ENCODE measurements at regions of chr1 and their contacts with region 1.

Region 1: DNA sequence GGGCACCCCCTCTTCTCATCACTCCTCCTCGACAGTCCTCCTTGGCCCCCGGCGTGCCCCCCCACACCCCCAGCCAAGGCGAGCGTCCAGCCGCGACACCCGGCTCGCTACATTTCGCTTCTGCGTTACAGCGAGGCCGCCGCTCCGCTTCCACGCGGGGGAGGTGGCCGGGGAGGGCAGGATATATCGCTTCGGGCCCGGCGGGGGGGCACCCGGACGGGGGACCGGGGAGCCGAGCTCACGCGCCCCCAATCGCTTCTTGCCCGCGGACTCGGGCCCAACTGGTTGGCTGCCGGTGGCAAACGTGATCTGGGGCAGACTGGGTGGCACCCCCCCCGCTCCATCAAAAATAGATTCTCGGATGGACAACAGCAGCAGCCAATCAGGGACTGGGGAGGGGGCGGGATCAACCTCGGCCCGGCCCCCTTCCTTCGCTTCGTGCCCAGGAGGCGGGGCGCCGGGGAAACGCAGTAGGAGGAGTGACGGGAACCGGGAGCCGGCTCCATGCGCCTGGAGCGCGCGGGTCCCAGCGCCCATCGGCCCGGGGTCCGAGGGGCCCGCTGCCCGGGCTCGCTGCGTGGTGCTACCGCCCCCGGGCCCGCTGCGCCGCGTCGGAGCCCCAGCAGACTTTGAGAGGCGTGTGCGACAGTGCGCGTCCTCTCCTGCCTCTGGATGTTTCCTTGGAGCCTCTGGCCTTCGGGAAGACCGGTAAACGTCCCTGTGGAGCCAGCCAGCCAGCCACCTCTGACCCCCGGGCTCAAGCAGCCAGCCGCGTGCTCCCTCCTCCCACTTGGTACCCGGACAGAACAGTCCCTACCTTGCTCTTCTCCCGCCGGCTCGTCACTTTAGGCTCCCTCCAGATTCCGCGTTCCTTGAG is at the start of gene SLC41A1:
- DNase-seq: peak; percentile 95
- H3K4me3 Mint-ChIP-seq: peak within 1 kb of the TSS; percentile 89
- H3K27ac Mint-ChIP-seq: peak within 1 kb of the TSS; percentile 74
- H3K4me1 Mint-ChIP-seq: peaks cover 49% of the 10 kb centered on the region
- H3K27me3 Mint-ChIP-seq: no peaks in the 10 kb centered on the region
- total RNA-seq, gene SLC41A1: 32.1 to 33.9 TPM

Region 2: DNA sequence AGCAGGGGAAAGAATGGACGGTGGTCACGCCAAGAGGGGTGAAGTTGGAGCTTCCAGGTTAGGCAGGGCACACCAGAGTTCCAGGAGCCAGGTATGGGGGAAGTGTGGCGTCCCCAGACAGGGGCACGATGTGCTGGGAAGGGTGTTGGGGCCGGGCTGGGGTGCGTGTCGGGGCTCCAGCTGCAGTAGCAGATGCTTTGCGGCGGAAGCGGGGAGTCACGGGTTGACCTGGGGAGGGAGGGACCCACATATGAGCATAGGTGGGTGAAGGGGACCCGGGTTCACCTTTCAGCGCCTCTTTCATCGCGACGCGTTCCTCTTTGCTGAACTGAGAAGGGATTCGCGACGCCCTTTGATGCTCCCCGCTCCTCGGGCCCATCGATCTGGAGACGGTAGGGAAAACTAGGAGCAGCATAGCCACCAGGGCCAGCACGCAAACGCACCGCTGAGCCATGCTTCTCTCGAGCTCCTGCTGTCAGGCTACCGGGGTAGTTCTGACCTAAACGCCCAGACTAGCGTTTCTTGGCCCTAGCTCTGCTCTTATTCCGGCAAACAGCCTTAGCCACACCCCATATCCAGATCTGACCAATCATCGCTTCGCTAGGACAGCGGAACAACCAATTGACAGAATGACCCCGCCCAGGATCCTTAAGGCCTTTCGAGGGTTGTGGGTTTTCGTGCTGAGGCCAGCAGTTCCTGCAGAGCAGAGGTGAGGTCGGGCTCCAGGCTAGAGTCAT is 36.7 kb after region 1 on chr1 and contains the start of gene PM20D1:
- CTCF ChIA-PET with region 1: no interaction called
- intact Hi-C with region 1: loop called (anchors 2 kb)
- DNase-seq: peak; percentile 92
- H3K4me3 Mint-ChIP-seq: peak within 1 kb of the TSS; percentile 87
- H3K27ac Mint-ChIP-seq: peak within 1 kb of the TSS; percentile 53
- H3K4me1 Mint-ChIP-seq: peaks cover 28% of the 10 kb centered on the region
- H3K27me3 Mint-ChIP-seq: no peaks in the 10 kb centered on the region
- total RNA-seq, gene PM20D1: 0.59 to 0.62 TPM

Region 3: DNA sequence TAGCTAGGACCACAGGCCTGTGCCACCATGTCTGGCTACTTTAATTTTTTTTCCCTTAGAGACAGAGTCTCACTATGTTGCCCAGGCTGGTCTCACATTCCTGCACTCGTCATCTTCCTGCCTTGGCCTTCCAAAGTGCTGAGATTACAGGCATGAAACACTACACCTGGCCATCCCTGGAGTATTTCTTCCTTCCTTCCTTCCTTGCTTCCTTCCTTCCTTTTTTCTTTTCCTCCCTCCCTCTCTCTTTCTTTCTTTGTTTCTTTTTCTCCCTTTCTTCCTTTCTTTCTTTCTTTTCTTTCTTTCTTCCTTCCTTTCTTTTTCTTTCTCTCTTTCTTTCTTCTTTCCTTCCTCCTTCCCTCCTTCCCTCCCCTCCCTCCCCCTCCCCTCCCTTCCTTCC is 83.2 kb after region 1 on chr1:
- CTCF ChIA-PET with region 1: no interaction called
- intact Hi-C with region 1: no loop called
- DNase-seq: no peak
- H3K4me3 Mint-ChIP-seq: no peak overlapping the region
- H3K27ac Mint-ChIP-seq: no peak overlapping the region
- H3K4me1 Mint-ChIP-seq: peaks cover 2% of the 10 kb centered on the region
- H3K27me3 Mint-ChIP-seq: peaks cover 11% of the 10 kb centered on the region

Region 4: GRCh38 chr1:205916541-205916940 is 103.4 kb after region 1 on chr1:
- CTCF ChIA-PET with region 1: no interaction called
- intact Hi-C with region 1: no loop called
- DNase-seq: no peak
- H3K4me3 Mint-ChIP-seq: no peak overlapping the region
- H3K27ac Mint-ChIP-seq: no peak overlapping the region
- H3K4me1 Mint-ChIP-seq: no peaks in the 10 kb centered on the region
- H3K27me3 Mint-ChIP-seq: no peaks in the 10 kb centered on the region

Region 5: GRCh38 chr1:205998457-205999241 is 185.5 kb after region 1 on chr1:
- CTCF ChIA-PET with region 1: no interaction called
- intact Hi-C with region 1: no loop called
- DNase-seq: no peak
- H3K4me3 Mint-ChIP-seq: no peak overlapping the region
- H3K27ac Mint-ChIP-seq: no peak overlapping the region
- H3K4me1 Mint-ChIP-seq: peaks cover 15% of the 10 kb centered on the region
- H3K27me3 Mint-ChIP-seq: no peaks in the 10 kb centered on the region

Region 6: DNA sequence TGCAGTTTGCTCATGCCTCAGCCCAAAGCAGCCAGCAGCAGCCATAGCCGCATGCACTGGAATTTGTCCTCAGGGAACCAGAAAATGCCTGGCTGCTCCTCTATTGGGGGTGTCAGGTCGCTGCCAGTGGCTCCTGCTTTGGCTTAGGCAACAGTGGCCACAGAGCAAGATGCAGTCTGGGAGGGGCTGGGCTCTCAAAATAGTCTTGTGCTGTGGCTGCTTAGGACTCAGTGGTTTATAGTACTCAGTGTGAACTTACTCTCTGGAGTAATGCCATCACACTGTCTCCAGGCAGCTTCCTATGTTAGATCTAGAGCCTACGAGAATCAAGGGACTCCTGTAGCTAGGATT is 1533.4 kb after region 1 on chr1:
- CTCF ChIA-PET with region 1: no interaction called
- intact Hi-C with region 1: no loop called
- DNase-seq: no peak
- H3K4me3 Mint-ChIP-seq: no peak overlapping the region
- H3K27ac Mint-ChIP-seq: no peak overlapping the region
- H3K4me1 Mint-ChIP-seq: peaks cover 86% of the 10 kb centered on the region
- H3K27me3 Mint-ChIP-seq: no peaks in the 10 kb centered on the region

Measured in activated naive CD4-positive, alpha-beta T cell treated with anti-CD3 and anti-CD28 coated beads for 36 hours (primary cell).